B cell (primary cell): ENCODE measurements at regions of chr15 and their contacts with region 1.

Region 1: GRCh38 chr15:28123408-28124023 is 24.4 kb upstream of the OCA2 start:
- DNase-seq: peak; percentile 53
- ATAC-seq: peak; percentile 49
- H3K4me3 ChIP-seq: no peak overlapping the region
- H3K4me3 Mint-ChIP-seq: no peak overlapping the region
- H3K27ac ChIP-seq: no peak overlapping the region
- H3K27ac Mint-ChIP-seq: no peak overlapping the region
- H3K4me1 ChIP-seq: peaks cover 0 to 5% of the 10 kb centered on the region in 2 donors
- H3K4me1 Mint-ChIP-seq: peaks cover 13% of the 10 kb centered on the region
- H3K27me3 ChIP-seq: no peaks in the 10 kb centered on the region
- H3K27me3 Mint-ChIP-seq: no peaks in the 10 kb centered on the region
- CTCF ChIP-seq: peak; percentile 61

Region 2: GRCh38 chr15:28086175-28086703 is 37.3 kb before region 1 on chr15:
- CTCF ChIA-PET with region 1: interaction called, 7 read pairs
- POLR2A ChIA-PET with region 1: no interaction called
- intact Hi-C with region 1: loop called (anchors 1 kb)
- DNase-seq: peak; percentile 73
- ATAC-seq: peak; percentile 99
- H3K4me3 ChIP-seq: no peak overlapping the region
- H3K4me3 Mint-ChIP-seq: no peak overlapping the region
- H3K27ac ChIP-seq: no peak overlapping the region
- H3K27ac Mint-ChIP-seq: no peak overlapping the region
- H3K4me1 ChIP-seq: peaks cover 4 to 7% of the 10 kb centered on the region in 2 donors
- H3K4me1 Mint-ChIP-seq: peaks cover 9% of the 10 kb centered on the region
- H3K27me3 ChIP-seq: peaks cover 0 to 21% (median 5%) of the 10 kb centered on the region in 4 experiments
- H3K27me3 Mint-ChIP-seq: peaks cover 44% of the 10 kb centered on the region
- CTCF ChIP-seq: peak; percentile 76